Calu3 (cell line): ENCODE measurements at regions of chr1 and their contacts with region 1.

Region 1: GRCh38 chr1:202888531-202889360 is at the start of gene RABIF:
- DNase-seq: peak; percentile 97
- H3K4me3 Mint-ChIP-seq: peak within 1 kb of the TSS; percentile 92
- H3K27ac Mint-ChIP-seq: peak within 1 kb of the TSS; percentile 97
- H3K4me1 Mint-ChIP-seq: peaks cover 17% of the 10 kb centered on the region
- H3K27me3 Mint-ChIP-seq: no peaks in the 10 kb centered on the region
- CTCF ChIP-seq: no peak
- total RNA-seq, gene RABIF: 9.8 and 10.5 TPM in 2 replicates

Region 2: GRCh38 chr1:202810615-202811295 is 78.0 kb before region 1 on chr1 and contains the start of gene PCAT6:
- CTCF ChIA-PET with region 1: interaction called, 3 read pairs
- intact Hi-C with region 1: loop called (anchors 2 kb)
- DNase-seq: peak; percentile 98
- H3K4me3 Mint-ChIP-seq: peak within 1 kb of the TSS; percentile 67
- H3K27ac Mint-ChIP-seq: peak within 1 kb of the TSS; percentile 42
- H3K4me1 Mint-ChIP-seq: peaks cover 41% of the 10 kb centered on the region
- H3K27me3 Mint-ChIP-seq: no peaks in the 10 kb centered on the region
- CTCF ChIP-seq: no peak
- total RNA-seq, gene PCAT6: 1.3 and 2.8 TPM in 2 replicates

Region 3: DNA sequence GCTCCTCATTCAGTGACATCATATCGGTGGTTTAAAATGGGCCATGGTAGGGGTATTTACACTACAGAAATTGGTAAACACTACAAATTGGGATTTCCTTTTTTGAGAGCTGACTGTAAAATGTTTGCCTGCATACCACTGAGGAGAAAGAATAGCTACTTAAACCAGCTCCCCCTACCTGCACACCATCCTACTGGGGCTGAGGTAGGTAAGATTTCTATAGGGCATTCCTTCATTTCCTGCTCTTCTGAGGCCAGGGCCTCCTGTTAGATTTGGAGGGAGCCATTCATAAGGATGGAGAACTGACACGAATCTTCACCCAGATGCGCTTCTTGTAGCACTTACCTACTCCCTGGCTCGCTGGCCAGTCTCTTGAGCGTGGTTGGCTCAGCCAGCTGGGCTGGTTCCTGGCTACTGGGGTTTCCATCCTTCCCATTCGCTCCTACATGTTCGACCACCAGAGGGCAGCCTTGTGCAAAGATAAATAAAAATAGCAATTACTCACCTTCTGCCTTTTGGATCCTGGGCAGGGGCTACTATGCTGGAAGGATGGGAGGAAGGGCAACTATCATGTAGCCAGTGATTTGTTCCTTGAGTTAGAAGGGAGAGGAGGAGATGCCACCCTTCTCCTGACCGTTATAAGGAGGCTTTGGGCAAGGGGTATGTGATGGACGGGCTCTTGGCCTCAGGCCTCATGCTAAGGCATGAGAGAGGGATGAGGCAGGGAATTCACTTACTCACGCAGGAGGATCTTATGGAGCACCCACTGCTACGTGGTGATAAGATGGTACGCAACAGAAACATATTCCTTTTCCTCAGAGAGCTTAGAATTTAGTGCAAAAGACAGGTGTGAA is 615.9 kb after region 1 on chr1:
- CTCF ChIA-PET with region 1: no interaction called
- intact Hi-C with region 1: no loop called
- DNase-seq: peak; percentile 85
- H3K4me3 Mint-ChIP-seq: no peak overlapping the region
- H3K27ac Mint-ChIP-seq: no peak overlapping the region
- H3K4me1 Mint-ChIP-seq: peaks cover 10% of the 10 kb centered on the region
- H3K27me3 Mint-ChIP-seq: peaks cover 42% of the 10 kb centered on the region
- CTCF ChIP-seq: peak; percentile 88